HAP-1 (cell line): ENCODE measurements at regions of chr1 and their contacts with region 1.

Region 1: DNA sequence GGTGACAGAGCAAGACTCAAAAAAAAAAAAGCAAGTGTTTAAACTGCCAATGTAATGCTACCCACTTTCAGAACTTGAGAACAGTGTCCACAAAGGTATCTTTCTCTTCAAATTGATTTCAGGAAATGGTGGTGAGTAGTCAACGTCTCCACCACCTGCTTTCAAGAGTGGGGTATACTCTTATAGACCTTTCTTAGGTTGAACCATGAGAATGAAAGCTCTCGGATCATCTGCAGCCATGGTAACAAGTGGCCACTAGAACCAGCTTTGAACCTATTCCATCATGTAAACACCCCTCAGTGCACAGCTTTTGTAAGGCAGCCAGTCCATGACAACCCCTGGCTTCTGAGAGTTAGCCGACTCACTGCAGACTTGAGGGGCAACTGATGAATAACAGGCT is 107.4 kb downstream of the NTPCR start:
- DNase-seq: no peak
- H3K4me3 ChIP-seq: no peak overlapping the region
- H3K4me1 ChIP-seq: no peaks in the 10 kb centered on the region
- H3K27me3 ChIP-seq: no peaks in the 10 kb centered on the region

Region 2: DNA sequence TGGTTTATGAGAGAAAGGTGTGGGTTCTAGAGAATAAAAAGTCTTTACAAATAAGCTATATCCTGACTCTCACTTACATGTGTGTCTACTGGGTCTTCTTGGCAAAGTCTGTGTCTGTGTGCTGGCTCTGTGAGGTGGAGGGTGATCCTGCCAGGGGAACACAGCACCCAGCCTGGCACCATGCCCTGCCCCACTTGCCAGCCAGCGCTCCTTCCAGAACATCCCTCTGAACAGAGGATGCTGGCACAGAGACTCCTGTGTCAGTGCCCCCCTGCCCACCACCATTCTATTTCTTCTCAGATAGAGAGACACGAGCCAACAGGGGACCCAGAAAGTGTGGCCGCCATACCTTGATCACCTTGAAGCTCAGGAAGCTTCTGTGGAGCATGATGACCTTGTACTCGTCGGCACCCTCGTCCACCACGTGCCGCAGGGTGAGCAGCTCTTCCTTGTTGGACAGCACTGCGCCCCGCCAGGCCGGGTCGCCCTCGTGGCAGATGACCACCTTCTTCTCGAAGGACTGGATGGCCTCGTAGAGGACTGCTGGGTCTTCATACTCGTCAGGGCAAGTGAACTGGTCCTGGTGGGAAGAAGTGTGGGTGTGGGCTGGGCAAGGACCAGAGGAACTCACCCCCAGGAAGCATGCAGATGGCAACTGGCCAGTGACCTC is 57.7 kb before region 1 on chr1:
- in situ Hi-C with region 1: loop called (anchors 10 kb)
- DNase-seq: no peak
- H3K4me3 ChIP-seq: no peak overlapping the region
- H3K4me1 ChIP-seq: no peaks in the 10 kb centered on the region
- H3K27me3 ChIP-seq: no peaks in the 10 kb centered on the region